ENCODE measurements at regions of chr7 and their contacts with region 1.

Region 1: DNA sequence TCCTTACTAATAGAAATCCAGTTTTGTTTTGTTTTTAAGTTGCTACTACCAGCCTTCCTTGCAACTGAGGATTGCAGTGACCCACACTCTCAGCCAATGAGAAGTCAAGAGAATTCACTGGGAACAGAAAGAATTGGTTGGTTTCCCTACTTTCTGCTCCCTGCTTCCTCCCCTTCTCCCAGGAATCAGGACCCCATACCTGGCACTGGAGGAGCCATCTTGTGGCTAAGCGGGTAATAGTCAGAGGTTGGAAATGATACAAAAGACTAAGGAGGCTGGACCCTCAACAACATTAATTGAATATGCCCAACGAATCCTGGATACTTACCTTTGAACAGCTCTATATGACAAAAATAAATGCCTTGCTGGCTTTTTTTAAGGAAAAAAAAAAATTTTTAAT is 6.3 kb downstream of the TMEM176A start:
- DNase-seq: no peak
- H3K4me3 ChIP-seq: no peak overlapping the region
- H3K4me3 Mint-ChIP-seq: no peak overlapping the region
- H3K27ac ChIP-seq: no peak overlapping the region
- H3K27ac Mint-ChIP-seq: no peak overlapping the region
- H3K4me1 ChIP-seq: peaks cover 0 to 20% of the 10 kb centered on the region in 2 donors
- H3K4me1 Mint-ChIP-seq: peaks cover 14% of the 10 kb centered on the region
- H3K27me3 ChIP-seq: peaks cover 0 to 5% of the 10 kb centered on the region in 2 donors
- H3K27me3 Mint-ChIP-seq: peaks cover 3 to 17% (median 10%) of the 10 kb centered on the region in 3 donors
- CTCF ChIP-seq: no peak

Region 2: DNA sequence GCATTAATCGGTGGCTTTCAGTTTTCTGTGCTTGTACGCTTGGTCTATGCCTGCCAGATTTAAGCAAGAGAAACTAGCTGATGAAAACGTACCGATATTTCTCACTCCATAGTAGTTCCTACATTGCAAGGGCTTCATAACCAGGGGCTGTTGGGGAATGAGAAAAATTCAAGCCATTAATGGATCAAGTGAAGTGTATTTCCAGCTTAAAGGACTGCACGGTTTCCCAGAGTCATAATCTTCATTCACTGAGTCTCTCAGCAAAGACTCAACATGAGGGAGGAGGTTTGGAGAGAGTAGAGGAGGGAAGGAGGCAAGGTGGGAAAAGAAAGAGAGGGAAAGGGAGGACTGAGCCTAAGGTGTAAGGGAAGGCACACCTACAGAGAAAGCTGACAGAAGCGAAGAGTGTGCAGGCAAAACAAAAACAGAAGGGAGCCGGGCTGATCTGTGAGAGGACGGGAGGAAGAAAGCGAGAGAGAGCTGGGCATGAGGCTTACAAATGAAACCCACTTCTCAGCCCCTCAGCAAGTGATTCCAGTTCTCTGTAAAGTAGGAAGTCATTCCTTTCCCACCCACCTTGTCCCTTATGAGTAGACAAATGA is 120.7 kb before region 1 on chr7:
- intact Hi-C with region 1: no loop called
- DNase-seq: peak in 1 of 3 donors; percentile 7
- H3K4me3 ChIP-seq: peak overlapping the region; percentile 65 to 100 (median 83)
- H3K4me3 Mint-ChIP-seq: peak overlapping the region; percentile 90 to 100
- H3K27ac ChIP-seq: peak overlapping the region; percentile 51 to 84
- H3K27ac Mint-ChIP-seq: peak overlapping the region; percentile 90 to 96 (median 92)
- H3K4me1 ChIP-seq: peaks cover 47 to 51% of the 10 kb centered on the region in 2 donors
- H3K4me1 Mint-ChIP-seq: peaks cover 73% of the 10 kb centered on the region
- H3K27me3 ChIP-seq: no peaks in the 10 kb centered on the region
- H3K27me3 Mint-ChIP-seq: peaks cover 0 to 5% (median 0%) of the 10 kb centered on the region in 3 donors
- CTCF ChIP-seq: no peak

Region 3: DNA sequence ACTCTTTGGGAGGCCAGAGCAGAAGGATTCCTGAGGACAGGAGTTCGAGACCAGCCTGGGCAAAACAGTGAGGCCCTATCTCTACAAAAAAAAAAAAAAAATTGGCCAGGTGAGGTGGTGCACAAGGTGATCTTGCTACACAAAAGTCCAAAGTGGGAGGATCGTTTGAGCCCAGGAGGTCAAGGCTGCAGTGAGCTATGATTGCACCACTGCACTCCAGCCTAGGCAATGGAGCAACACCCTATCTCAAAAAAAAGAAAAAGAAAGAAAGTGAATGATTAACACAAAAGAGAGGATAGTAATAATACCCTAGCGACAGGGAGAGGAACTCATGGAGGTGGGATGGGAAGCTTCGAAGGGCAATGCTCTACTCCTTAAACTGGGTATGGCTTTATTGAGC is 37.1 kb before region 1 on chr7:
- intact Hi-C with region 1: loop called in 1 of 2 experiments (anchors 5 kb)
- DNase-seq: no peak
- H3K4me3 ChIP-seq: no peak overlapping the region
- H3K4me3 Mint-ChIP-seq: no peak overlapping the region
- H3K27ac ChIP-seq: no peak overlapping the region
- H3K27ac Mint-ChIP-seq: no peak overlapping the region
- H3K4me1 ChIP-seq: no peaks in the 10 kb centered on the region
- H3K4me1 Mint-ChIP-seq: peaks cover 2% of the 10 kb centered on the region
- H3K27me3 ChIP-seq: no peaks in the 10 kb centered on the region
- H3K27me3 Mint-ChIP-seq: no peaks in the 10 kb centered on the region
- CTCF ChIP-seq: no peak

Region 4: GRCh38 chr7:151174246-151175046 is 367.6 kb after region 1 on chr7:
- intact Hi-C with region 1: no loop called
- DNase-seq: peak in 1 of 3 donors; percentile 33
- H3K4me3 ChIP-seq: no peak overlapping the region
- H3K4me3 Mint-ChIP-seq: no peak overlapping the region
- H3K27ac ChIP-seq: no peak overlapping the region
- H3K27ac Mint-ChIP-seq: peak overlapping the region in 1 of 7 donors; percentile 46
- H3K4me1 ChIP-seq: no peaks in the 10 kb centered on the region
- H3K4me1 Mint-ChIP-seq: peaks cover 4% of the 10 kb centered on the region
- H3K27me3 ChIP-seq: peaks cover 7 to 44% of the 10 kb centered on the region in 2 donors
- H3K27me3 Mint-ChIP-seq: peaks cover 39 to 69% (median 40%) of the 10 kb centered on the region in 3 donors
- CTCF ChIP-seq: no peak

Measured in CD14-positive monocyte (primary cell).